ENCODE measurements at regions of chr7 and their contacts with region 1.

Region 1: DNA sequence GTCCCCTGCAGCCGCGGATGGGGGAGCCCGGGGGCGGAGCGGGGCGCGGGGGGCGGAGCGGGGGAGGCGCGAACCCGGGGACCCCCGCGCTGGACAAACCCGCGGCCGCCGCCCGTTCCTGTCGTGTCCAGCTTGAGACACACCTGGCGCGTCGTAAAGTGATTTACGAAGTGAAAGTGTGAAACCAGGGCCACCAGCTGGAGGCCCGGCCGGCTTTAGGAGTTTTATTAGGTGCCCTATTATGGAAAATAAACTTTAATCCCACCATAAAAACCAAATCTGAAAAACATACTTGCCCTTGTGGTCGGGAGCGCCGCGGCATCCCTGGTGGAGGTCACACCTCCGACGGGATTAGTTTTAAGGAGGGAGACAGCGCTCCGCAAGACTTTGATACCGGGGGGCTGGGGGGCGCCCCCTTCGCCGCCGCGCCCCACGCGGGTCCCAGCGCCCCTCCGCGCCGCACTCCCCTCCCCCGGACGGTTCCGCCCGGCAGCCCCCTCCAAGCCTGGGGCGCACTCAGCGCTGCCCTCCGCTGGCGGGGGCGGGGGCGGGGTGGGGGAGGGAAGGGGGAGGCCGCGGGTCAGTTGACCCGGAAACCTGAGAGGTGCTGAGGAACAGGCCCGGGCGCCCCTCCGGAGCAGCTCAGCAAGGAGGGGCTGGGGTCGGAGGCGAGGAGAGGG is 10.3 kb downstream of the MNX1 start:
- DNase-seq: no peak
- ATAC-seq: peak; percentile 49
- H3K4me3 ChIP-seq: peak overlapping the region; percentile 46 to 72
- H3K27ac ChIP-seq: no peak overlapping the region
- H3K4me1 ChIP-seq: peaks cover 4% of the 10 kb centered on the region; the same call in 1 of the 2 replicates
- H3K27me3 ChIP-seq: no peaks in the 10 kb centered on the region
- CTCF ChIP-seq: no peak

Region 2: GRCh38 chr7:156954941-156955340 is 45.2 kb before region 1 on chr7:
- CTCF ChIA-PET with region 1: interaction called, 7 read pairs
- POLR2A ChIA-PET with region 1: interaction called, 10 read pairs
- in situ Hi-C with region 1: no loop called
- intact Hi-C with region 1: no loop called
- DNase-seq: no peak
- ATAC-seq: no peak
- H3K4me3 ChIP-seq: no peak overlapping the region
- H3K27ac ChIP-seq: no peak overlapping the region
- H3K4me1 ChIP-seq: peaks cover 6% of the 10 kb centered on the region
- H3K27me3 ChIP-seq: no peaks in the 10 kb centered on the region
- CTCF ChIP-seq: no peak